Activated T-helper 1 cell treated with anti-CD3 and anti-CD28 coated beads, Interleukin-12 subunit alpha, Interleukin-12 subunit beta, Interleukin-2, Interleukin-4 antibody, amounts not matched to agents 30 ng/mL and 10 ng/mL and 1 ng/mL, durations not matched to agents 14 hours and 24 hours and 36 hours (primary cell): ENCODE measurements at regions of chr6 and their contacts with region 1.

Region 1: DNA sequence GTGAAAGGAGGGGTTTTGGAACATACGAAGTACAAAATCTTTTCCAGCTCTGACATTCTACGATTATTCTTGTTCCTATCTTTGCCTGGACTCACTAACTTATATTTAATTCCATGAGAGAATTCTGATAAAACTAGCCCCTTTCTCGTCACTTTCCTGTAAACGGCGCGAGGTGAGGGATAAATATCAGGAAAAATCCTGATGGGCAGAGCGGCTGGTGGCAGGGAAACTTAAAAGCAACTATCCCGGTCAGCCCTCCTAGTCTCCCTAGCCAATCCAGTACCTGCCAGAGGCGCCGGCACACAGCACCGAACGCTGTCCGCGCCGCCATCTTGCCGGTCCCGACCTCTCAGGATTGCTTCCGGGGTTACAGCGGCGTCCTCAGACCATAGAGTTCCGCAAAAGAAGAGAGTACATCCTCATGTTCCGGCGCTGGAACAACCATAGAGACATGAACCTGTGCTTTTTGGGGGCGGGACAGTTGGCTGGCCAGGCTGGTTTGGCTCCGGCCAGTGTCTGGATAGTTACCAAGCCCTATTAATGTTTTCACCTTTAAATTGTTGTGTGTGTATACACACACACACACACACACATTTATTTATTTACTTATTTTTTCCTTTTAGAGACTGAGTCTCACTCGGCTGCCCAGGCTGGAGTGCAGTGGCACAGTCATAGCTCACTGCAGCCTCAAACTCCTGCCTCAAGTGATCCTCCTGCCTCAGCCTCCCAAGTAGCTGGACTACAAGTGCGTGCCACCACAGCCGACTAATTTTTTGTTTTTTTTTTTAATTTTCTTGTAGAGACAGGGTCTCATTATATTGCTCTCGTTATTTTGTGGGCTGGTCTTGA is at the start of gene MRPS10:
- DNase-seq: peak; percentile 89
- H3K4me3 Mint-ChIP-seq: peak within 1 kb of the TSS; percentile 96
- H3K27ac Mint-ChIP-seq: peak within 1 kb of the TSS; percentile 89
- H3K4me1 Mint-ChIP-seq: peaks cover 20% of the 10 kb centered on the region
- H3K27me3 Mint-ChIP-seq: no peaks in the 10 kb centered on the region
- total RNA-seq, gene MRPS10: 48.8 and 49.7 TPM in 2 replicates

Region 2: DNA sequence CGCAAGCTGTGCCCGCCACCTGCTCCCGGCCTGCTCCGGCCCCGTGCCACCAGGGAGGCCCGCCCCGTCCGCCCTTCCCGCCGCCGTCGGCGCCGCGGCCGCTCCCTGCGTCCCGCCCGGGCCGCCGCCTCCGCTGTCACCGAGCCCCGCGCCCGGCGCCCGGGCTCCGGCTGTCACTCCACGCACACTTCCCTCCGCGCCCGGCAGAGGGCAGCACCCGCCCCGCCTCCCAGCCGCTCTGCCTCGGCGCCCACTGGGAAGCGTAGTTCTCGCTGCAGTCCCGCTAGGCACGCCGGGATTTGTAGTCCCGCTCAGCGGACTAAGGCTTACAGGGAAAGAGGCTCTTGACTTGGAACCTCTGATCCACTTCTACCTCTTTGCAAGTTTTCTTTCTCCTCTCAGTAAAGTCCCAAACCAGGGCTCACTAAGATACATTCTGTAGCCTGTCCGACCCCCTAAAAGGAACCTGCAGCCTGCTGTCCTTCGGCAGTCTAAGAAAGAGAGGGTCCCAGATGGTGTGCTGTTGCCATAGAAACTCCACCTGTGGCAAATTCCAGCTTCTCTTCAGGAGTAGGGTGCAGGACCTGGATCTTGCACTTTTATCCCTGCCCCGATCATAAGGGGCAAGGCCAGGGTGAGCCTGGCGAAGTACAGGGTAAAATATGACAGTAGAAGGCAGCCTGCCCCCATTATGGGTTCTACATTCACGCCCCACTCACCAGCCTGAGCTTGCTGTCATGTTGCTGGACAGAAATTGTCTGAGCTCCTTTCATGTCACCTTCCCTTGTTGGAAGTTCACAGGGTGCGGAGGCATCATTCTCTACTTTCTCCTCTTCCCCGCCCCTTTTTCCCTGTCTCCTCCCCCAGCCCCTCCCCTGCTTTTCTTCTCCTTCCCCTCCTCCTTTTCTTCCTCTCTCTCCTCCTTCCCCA is 482.1 kb before region 1 on chr6 and contains the start of gene TFEB:
- intact Hi-C with region 1: loop called (anchors 1 kb)
- DNase-seq: peak; percentile 92
- H3K4me3 Mint-ChIP-seq: peak within 1 kb of the TSS; percentile 80
- H3K27ac Mint-ChIP-seq: peak within 1 kb of the TSS; percentile 31
- H3K4me1 Mint-ChIP-seq: peaks cover 23% of the 10 kb centered on the region
- H3K27me3 Mint-ChIP-seq: no peaks in the 10 kb centered on the region
- total RNA-seq, gene TFEB: 15.6 and 17.2 TPM in 2 replicates

Region 3: DNA sequence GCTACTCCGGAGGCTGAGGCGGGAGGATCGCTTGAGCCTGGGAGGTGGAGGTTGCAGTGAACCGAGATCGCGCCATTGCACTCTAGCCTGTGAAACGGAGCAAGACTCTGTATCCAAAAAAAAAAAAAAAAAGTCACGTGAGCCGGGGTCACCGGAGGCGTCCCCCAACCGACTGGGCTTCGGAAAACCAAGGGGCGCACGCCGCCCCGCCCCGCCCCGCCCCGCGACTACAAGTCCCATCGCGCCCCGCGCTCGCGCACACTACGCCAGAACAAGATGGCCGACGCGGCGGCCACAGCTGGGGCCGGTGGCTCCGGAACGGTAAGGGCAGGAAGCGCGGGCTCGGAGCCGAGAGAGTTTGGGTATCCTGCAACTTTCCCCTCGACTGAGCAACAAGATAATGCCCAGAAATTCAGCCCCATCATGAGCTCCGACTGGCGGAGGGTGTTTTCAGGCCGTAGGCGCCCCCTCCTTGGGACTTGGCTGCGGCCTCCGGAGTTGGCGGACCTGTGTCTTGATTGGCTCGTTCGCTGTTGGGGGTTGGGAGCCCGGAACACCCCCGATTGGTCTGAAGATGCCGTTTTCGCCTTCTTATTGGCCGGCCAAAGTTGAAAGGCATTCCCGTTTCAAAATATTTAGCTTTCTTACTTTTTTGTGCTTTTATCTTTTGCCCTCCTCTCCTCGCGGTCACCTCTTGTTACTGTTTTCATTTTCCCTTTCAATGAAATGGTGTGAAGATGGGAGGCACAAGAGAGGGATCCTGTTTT is 167.3 kb before region 1 on chr6 and contains the start of gene TAF8:
- intact Hi-C with region 1: loop called (anchors 1 kb)
- DNase-seq: peak; percentile 87
- H3K4me3 Mint-ChIP-seq: peak within 1 kb of the TSS; percentile 93
- H3K27ac Mint-ChIP-seq: peak within 1 kb of the TSS; percentile 92
- H3K4me1 Mint-ChIP-seq: peaks cover 58% of the 10 kb centered on the region
- H3K27me3 Mint-ChIP-seq: no peaks in the 10 kb centered on the region
- total RNA-seq, gene TAF8: 36.7 and 38.3 TPM in 2 replicates

Region 4: GRCh38 chr6:42075159-42075838 is 142.4 kb before region 1 on chr6:
- intact Hi-C with region 1: loop called (anchors 1 kb)
- DNase-seq: peak; percentile 33
- H3K4me3 Mint-ChIP-seq: no peak overlapping the region
- H3K27ac Mint-ChIP-seq: no peak overlapping the region
- H3K4me1 Mint-ChIP-seq: peaks cover 8% of the 10 kb centered on the region
- H3K27me3 Mint-ChIP-seq: no peaks in the 10 kb centered on the region

Region 5: GRCh38 chr6:42166444-42167141 is 51.1 kb before region 1 on chr6:
- intact Hi-C with region 1: loop called (anchors 5 kb)
- DNase-seq: peak; percentile 68
- H3K4me3 Mint-ChIP-seq: no peak overlapping the region
- H3K27ac Mint-ChIP-seq: no peak overlapping the region
- H3K4me1 Mint-ChIP-seq: peaks cover 7% of the 10 kb centered on the region
- H3K27me3 Mint-ChIP-seq: peaks cover 7% of the 10 kb centered on the region

Region 6: GRCh38 chr6:42547407-42548329 is 329.9 kb after region 1 on chr6:
- intact Hi-C with region 1: loop called (anchors 1 kb)
- DNase-seq: peak; percentile 82
- H3K4me3 Mint-ChIP-seq: peak overlapping the region; percentile 71
- H3K27ac Mint-ChIP-seq: peak overlapping the region; percentile 29
- H3K4me1 Mint-ChIP-seq: peaks cover 13% of the 10 kb centered on the region
- H3K27me3 Mint-ChIP-seq: peaks cover 18% of the 10 kb centered on the region

Region 7: DNA sequence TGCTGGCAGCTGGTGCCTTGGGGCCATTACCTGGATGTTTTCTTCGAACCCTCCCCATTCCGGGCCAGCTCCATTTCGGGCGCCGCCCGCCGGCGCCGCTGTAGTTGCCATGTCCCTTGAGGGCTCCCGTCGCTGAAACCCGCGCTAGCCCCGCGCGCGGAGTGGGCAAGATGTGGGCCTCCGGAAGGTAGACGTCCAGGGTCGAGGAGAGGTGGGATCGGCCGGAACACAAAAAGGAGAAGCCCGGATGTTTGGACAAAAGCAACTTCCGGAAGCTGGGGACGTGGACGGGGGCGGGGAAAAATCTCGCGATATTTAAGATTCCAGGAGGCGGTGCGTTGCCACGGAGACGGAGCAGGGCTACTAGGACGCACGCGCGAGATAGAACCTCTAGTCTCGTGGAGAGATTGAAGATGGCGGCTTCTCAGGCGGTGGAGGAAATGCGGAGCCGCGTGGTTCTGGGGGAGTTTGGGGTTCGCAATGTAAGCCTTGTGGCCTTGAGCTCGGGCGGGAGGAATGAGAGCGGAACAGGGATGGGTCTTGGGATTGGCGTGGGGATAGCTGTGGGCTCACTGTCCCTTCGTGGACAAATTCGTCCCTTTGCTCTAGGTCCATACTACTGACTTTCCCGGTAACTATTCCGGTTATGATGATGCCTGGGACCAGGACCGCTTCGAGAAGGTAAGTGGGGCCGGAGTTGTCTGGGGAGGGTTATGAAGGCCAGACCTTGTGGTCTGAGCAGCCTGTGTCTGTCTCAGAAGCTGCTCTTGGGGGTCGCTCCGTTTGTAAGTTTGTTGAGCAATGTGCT is 1299.2 kb after region 1 on chr6 and contains the starts of genes POLR1C and YIPF3:
- intact Hi-C with region 1: loop called (anchors 2 kb)
- DNase-seq: peak; percentile 95
- H3K4me3 Mint-ChIP-seq: no peak within 1 kb of the TSS
- H3K27ac Mint-ChIP-seq: no peak within 1 kb of the TSS
- H3K4me1 Mint-ChIP-seq: peaks cover 20% of the 10 kb centered on the region
- H3K27me3 Mint-ChIP-seq: no peaks in the 10 kb centered on the region
- total RNA-seq, gene POLR1C: 85.8 and 98.0 TPM in 2 replicates
- total RNA-seq, gene YIPF3: 60.2 and 62.5 TPM in 2 replicates